Activated CD4-positive, alpha-beta memory T cell treated with anti-CD3 and anti-CD28 coated beads for 36 hours (primary cell): ENCODE measurements at regions of chr1 and their contacts with region 1.

Region 1: GRCh38 chr1:231757101-231757404 is 130.5 kb downstream of the DISC1 start:
- DNase-seq: no peak
- H3K4me3 Mint-ChIP-seq: no peak overlapping the region
- H3K27ac Mint-ChIP-seq: no peak overlapping the region
- H3K4me1 Mint-ChIP-seq: no peaks in the 10 kb centered on the region
- H3K27me3 Mint-ChIP-seq: no peaks in the 10 kb centered on the region

Region 2: GRCh38 chr1:230797942-230798418 is 959.1 kb before region 1 on chr1:
- CTCF ChIA-PET with region 1: no interaction called
- POLR2A ChIA-PET with region 1: no interaction called
- intact Hi-C with region 1: no loop called
- DNase-seq: peak; percentile 14
- H3K4me3 Mint-ChIP-seq: no peak overlapping the region
- H3K27ac Mint-ChIP-seq: no peak overlapping the region
- H3K4me1 Mint-ChIP-seq: no peaks in the 10 kb centered on the region
- H3K27me3 Mint-ChIP-seq: peaks cover 18% of the 10 kb centered on the region

Region 3: GRCh38 chr1:231714440-231714839 is 42.6 kb before region 1 on chr1:
- CTCF ChIA-PET with region 1: interaction called, 10 read pairs
- POLR2A ChIA-PET with region 1: no interaction called
- intact Hi-C with region 1: no loop called
- DNase-seq: no peak
- H3K4me3 Mint-ChIP-seq: no peak overlapping the region
- H3K27ac Mint-ChIP-seq: no peak overlapping the region
- H3K4me1 Mint-ChIP-seq: no peaks in the 10 kb centered on the region
- H3K27me3 Mint-ChIP-seq: no peaks in the 10 kb centered on the region

Region 4: GRCh38 chr1:231743966-231744365 is 13.1 kb before region 1 on chr1:
- CTCF ChIA-PET with region 1: interaction called, 34 read pairs
- POLR2A ChIA-PET with region 1: no interaction called
- intact Hi-C with region 1: no loop called
- DNase-seq: no peak
- H3K4me3 Mint-ChIP-seq: no peak overlapping the region
- H3K27ac Mint-ChIP-seq: no peak overlapping the region
- H3K4me1 Mint-ChIP-seq: no peaks in the 10 kb centered on the region
- H3K27me3 Mint-ChIP-seq: no peaks in the 10 kb centered on the region

Region 5: DNA sequence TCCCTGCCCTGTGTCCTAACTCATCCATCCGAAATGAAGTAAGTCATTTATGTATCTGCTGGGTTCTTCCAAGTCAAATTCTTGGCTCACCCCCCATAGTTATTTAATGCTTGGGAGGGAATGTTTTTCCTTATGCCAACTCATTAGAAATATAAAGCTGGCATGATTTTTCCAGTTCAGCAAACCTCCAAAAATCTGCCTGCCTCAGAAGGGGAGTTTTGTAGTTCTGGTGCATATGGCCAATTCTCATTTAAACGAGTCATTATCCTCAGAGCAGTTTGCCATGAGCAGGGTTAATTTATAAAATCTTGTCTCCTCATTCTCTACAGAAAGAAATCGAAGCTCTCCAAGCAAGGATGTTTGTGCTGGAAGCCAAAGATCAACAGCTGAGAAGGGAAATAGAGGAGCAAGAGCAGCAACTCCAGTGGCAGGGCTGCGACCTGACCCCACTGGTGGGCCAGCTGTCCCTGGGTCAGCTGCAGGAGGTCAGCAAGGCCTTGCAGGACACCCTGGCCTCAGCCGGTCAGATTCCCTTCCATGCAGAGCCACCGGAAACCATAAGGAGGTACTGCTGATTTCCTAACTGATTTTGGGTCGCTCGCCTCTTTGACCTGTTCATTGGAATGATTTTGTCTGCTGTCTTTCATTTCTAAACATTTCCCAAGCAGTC is 13.6 kb after region 1 on chr1:
- CTCF ChIA-PET with region 1: interaction called, 41 read pairs
- POLR2A ChIA-PET with region 1: no interaction called
- intact Hi-C with region 1: no loop called
- DNase-seq: no peak
- H3K4me3 Mint-ChIP-seq: no peak overlapping the region
- H3K27ac Mint-ChIP-seq: no peak overlapping the region
- H3K4me1 Mint-ChIP-seq: no peaks in the 10 kb centered on the region
- H3K27me3 Mint-ChIP-seq: no peaks in the 10 kb centered on the region

Region 6: DNA sequence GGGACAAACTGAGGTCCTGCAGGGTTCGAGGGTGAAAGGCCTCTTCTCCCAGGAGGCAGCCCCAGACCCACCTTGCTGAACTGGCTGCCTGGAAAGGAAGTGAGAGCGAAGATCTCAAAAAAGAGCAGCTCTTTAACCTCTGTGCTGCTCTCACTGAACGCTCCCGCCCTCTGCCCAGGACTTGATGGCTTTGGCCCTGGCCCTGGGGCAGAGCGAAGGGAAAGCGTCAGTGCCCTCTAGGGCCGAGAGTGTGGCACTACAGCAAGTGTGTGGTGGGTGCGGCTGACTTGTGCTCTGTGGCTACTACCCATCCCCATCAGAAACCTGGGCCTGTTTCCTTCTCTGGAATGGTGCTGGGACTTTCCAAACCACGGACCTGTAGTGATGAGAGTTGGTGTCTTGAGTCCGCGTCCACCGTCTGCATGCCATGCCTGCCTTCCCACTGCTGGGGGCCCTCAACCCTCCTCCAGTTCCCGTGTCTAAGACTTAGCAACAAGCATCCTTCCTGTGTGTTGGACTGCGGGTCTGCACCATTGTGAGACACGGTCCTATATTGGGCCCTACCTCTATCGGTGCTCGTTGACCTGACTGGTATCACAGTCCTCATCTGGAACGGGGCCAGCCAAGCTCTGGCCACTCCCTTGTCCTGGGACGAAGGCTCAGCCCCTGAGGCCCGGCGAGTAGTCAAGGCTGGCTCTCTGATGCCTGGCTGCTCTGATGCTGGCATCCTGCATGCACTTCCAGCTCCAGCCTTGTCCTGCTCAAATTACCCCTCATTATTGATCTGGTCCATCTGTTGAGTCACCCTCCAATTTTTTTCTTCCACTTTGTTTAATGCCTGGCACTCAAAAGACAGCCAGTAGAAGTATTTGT is 49.8 kb after region 1 on chr1:
- CTCF ChIA-PET with region 1: interaction called, 13 read pairs
- POLR2A ChIA-PET with region 1: no interaction called
- intact Hi-C with region 1: loop called (anchors 5 kb)
- DNase-seq: peak; percentile 60
- H3K4me3 Mint-ChIP-seq: no peak overlapping the region
- H3K27ac Mint-ChIP-seq: no peak overlapping the region
- H3K4me1 Mint-ChIP-seq: no peaks in the 10 kb centered on the region
- H3K27me3 Mint-ChIP-seq: no peaks in the 10 kb centered on the region

Region 7: DNA sequence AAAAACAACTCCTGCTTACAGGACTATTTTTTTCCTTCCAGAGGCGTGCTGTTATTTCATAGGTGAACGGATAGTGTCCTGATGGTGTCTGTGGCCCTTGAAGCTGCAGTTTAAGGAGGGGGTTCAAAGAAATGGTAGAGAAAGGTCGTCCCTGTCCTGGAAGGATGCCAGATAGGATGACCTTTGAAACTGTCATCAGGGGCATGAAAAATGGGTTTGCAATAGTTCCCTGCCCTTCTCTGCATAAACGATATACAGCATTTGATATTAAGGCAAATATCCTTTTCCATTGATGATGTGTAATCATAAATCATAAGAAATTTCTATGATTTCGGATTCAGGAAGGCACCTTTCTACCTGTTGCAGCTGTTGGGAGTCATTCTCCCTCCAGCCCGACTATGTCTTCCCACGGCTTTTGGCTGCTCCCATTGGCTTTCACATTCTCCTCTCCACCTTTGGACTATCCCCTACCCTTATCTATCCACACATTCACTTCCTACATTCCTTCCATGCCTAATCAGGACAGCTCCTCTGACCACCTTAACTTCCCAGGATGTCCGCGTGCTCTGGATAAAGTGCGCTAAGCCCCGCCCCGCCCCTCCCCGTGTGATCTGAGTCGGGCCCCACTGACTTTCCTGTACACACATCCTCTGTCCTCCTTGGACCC is 79.3 kb after region 1 on chr1:
- CTCF ChIA-PET with region 1: no interaction called
- POLR2A ChIA-PET with region 1: no interaction called
- intact Hi-C with region 1: no loop called
- DNase-seq: no peak
- H3K4me3 Mint-ChIP-seq: no peak overlapping the region
- H3K27ac Mint-ChIP-seq: no peak overlapping the region
- H3K4me1 Mint-ChIP-seq: no peaks in the 10 kb centered on the region
- H3K27me3 Mint-ChIP-seq: no peaks in the 10 kb centered on the region